B cell (primary cell): ENCODE measurements at regions of chr7 and their contacts with region 1.

Region 1: DNA sequence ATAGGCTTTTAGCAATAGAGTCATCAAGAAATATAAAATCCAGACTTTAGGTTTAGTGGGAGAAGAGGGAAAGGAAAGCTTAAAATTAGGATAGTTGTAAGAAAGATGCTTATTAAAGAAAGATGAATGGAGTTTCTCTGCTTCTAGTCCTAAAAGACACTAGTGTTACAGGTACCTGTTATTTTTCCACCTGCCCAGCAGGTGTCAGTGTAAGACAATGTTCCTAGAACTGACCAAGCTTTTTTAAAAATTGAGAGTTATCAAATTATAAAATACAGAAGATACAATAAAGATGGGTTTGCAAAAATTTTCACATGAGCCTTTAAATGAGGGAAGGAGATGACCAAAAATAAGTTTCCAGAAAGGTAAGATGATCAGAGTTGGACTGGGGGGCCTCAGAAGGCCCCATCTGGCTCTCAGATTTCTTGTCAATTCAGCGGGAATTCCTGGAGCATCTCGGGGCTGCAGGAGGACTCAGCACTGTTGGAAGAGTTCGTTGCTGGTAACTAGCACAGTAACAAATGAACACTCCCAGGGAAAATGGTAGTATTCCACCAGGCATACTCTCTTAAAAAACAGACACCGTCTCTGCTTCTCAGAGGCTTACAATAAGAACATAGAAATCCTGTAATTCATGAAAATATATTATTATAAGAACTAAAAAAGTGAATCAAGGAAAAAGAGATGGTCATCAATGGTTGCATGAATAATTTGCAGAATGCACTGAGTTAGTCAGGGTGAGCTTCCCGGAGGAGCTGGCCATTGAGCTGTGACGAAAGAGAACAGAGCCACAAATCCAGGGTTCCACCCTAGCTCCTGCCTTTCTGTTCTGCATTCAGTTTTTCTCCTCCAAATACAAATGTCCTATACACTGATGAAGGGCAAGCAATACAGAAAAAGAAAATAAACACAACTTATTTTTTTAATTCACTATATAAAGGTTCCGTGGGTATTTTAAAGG is 71.8 kb upstream of the PIK3CG start:
- DNase-seq: peak; percentile 72
- ATAC-seq: peak; percentile 58
- H3K4me3 ChIP-seq: no peak overlapping the region
- H3K4me3 Mint-ChIP-seq: no peak overlapping the region
- H3K27ac ChIP-seq: no peak overlapping the region
- H3K27ac Mint-ChIP-seq: no peak overlapping the region
- H3K4me1 ChIP-seq: no peaks in the 10 kb centered on the region
- H3K4me1 Mint-ChIP-seq: no peaks in the 10 kb centered on the region
- H3K27me3 ChIP-seq: no peaks in the 10 kb centered on the region
- H3K27me3 Mint-ChIP-seq: no peaks in the 10 kb centered on the region
- CTCF ChIP-seq: peak; percentile 93

Region 2: GRCh38 chr7:105759670-105760550 is 1033.4 kb before region 1 on chr7:
- CTCF ChIA-PET with region 1: no interaction called
- POLR2A ChIA-PET with region 1: no interaction called
- intact Hi-C with region 1: no loop called
- DNase-seq: peak; percentile 44
- ATAC-seq: no peak
- H3K4me3 ChIP-seq: no peak overlapping the region
- H3K4me3 Mint-ChIP-seq: no peak overlapping the region
- H3K27ac ChIP-seq: no peak overlapping the region
- H3K27ac Mint-ChIP-seq: no peak overlapping the region
- H3K4me1 ChIP-seq: no peaks in the 10 kb centered on the region
- H3K4me1 Mint-ChIP-seq: no peaks in the 10 kb centered on the region
- H3K27me3 ChIP-seq: no peaks in the 10 kb centered on the region
- H3K27me3 Mint-ChIP-seq: no peaks in the 10 kb centered on the region
- CTCF ChIP-seq: peak; percentile 55

Region 3: GRCh38 chr7:106561666-106562411 is 231.5 kb before region 1 on chr7:
- CTCF ChIA-PET with region 1: no interaction called
- POLR2A ChIA-PET with region 1: no interaction called
- intact Hi-C with region 1: no loop called
- DNase-seq: no peak
- ATAC-seq: no peak
- H3K4me3 ChIP-seq: no peak overlapping the region
- H3K4me3 Mint-ChIP-seq: no peak overlapping the region
- H3K27ac ChIP-seq: no peak overlapping the region
- H3K27ac Mint-ChIP-seq: no peak overlapping the region
- H3K4me1 ChIP-seq: no peaks in the 10 kb centered on the region
- H3K4me1 Mint-ChIP-seq: peaks cover 1% of the 10 kb centered on the region
- H3K27me3 ChIP-seq: no peaks in the 10 kb centered on the region
- H3K27me3 Mint-ChIP-seq: no peaks in the 10 kb centered on the region
- CTCF ChIP-seq: no peak

Region 4: GRCh38 chr7:106870983-106871410 is 77.7 kb after region 1 on chr7:
- CTCF ChIA-PET with region 1: interaction called, 8 read pairs
- POLR2A ChIA-PET with region 1: no interaction called
- intact Hi-C with region 1: loop called (anchors 2 kb)
- DNase-seq: peak; percentile 75
- ATAC-seq: peak; percentile 83
- H3K4me3 ChIP-seq: peak overlapping the region in 4 of 5 experiments; percentile 1 to 37 (median 14)
- H3K4me3 Mint-ChIP-seq: peak overlapping the region; percentile 73
- H3K27ac ChIP-seq: peak overlapping the region; percentile 36 to 64
- H3K27ac Mint-ChIP-seq: peak overlapping the region; percentile 68
- H3K4me1 ChIP-seq: peaks cover 52 to 55% of the 10 kb centered on the region in 2 donors
- H3K4me1 Mint-ChIP-seq: peaks cover 76% of the 10 kb centered on the region
- H3K27me3 ChIP-seq: no peaks in the 10 kb centered on the region
- H3K27me3 Mint-ChIP-seq: no peaks in the 10 kb centered on the region
- CTCF ChIP-seq: no peak

Region 5: DNA sequence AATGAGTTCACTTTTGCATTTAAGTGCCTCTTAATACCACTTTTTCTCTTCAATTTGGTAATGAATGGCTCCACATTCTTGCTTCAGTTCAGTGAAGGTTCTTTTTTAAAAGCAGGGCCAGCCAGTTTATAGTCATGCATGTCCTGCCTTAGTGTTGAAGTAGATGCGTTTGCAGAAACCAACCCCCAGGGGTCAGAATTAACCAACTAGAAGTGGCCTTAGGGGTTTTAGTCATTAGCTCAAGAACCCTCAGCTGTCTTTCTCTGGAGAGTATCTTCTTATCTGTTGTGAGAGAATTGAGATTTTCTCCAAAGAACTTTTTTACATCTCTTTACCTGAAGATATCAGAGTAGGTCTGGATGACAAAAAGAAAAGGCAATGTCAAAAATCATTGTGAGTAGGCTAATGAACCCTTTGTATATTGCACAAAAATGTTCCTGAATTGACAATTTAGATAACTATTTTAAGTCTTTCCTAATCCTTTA is 154.0 kb after region 1 on chr7:
- CTCF ChIA-PET with region 1: interaction called, 9 read pairs
- POLR2A ChIA-PET with region 1: no interaction called
- intact Hi-C with region 1: loop called (anchors 1 kb)
- DNase-seq: peak; percentile 49
- ATAC-seq: peak; percentile 57
- H3K4me3 ChIP-seq: no peak overlapping the region
- H3K4me3 Mint-ChIP-seq: no peak overlapping the region
- H3K27ac ChIP-seq: no peak overlapping the region
- H3K27ac Mint-ChIP-seq: no peak overlapping the region
- H3K4me1 ChIP-seq: no peaks in the 10 kb centered on the region
- H3K4me1 Mint-ChIP-seq: no peaks in the 10 kb centered on the region
- H3K27me3 ChIP-seq: no peaks in the 10 kb centered on the region
- H3K27me3 Mint-ChIP-seq: peaks cover 4% of the 10 kb centered on the region
- CTCF ChIP-seq: peak; percentile 56

Region 6: GRCh38 chr7:107044347-107045194 is 251.3 kb after region 1 on chr7 and contains the start of gene PRKAR2B:
- CTCF ChIA-PET with region 1: interaction called, 3 read pairs
- POLR2A ChIA-PET with region 1: no interaction called
- intact Hi-C with region 1: loop called (anchors 10 kb)
- DNase-seq: peak; percentile 86
- ATAC-seq: peak; percentile 94
- H3K4me3 ChIP-seq: peak within 1 kb of the TSS; percentile 41 to 69 (median 53)
- H3K4me3 Mint-ChIP-seq: peak within 1 kb of the TSS; percentile 92
- H3K27ac ChIP-seq: no peak within 1 kb of the TSS
- H3K27ac Mint-ChIP-seq: peak within 1 kb of the TSS; percentile 69
- H3K4me1 ChIP-seq: peaks cover 7 to 13% of the 10 kb centered on the region in 2 donors
- H3K4me1 Mint-ChIP-seq: peaks cover 13% of the 10 kb centered on the region
- H3K27me3 ChIP-seq: peaks cover 0 to 26% (median 24%) of the 10 kb centered on the region in 4 experiments
- H3K27me3 Mint-ChIP-seq: peaks cover 37% of the 10 kb centered on the region
- CTCF ChIP-seq: no peak
- total RNA-seq, gene PRKAR2B: 0.39 and 0.81 TPM in 2 replicates

Region 7: GRCh38 chr7:107879400-107880035 is 1086.2 kb after region 1 on chr7:
- CTCF ChIA-PET with region 1: interaction called, 3 read pairs
- POLR2A ChIA-PET with region 1: no interaction called
- intact Hi-C with region 1: loop called (anchors 5 kb)
- DNase-seq: peak; percentile 52
- ATAC-seq: peak; percentile 58
- H3K4me3 ChIP-seq: no peak overlapping the region
- H3K4me3 Mint-ChIP-seq: no peak overlapping the region
- H3K27ac ChIP-seq: no peak overlapping the region
- H3K27ac Mint-ChIP-seq: no peak overlapping the region
- H3K4me1 ChIP-seq: no peaks in the 10 kb centered on the region
- H3K4me1 Mint-ChIP-seq: peaks cover 3% of the 10 kb centered on the region
- H3K27me3 ChIP-seq: peaks cover 0 to 14% (median 3%) of the 10 kb centered on the region in 4 experiments
- H3K27me3 Mint-ChIP-seq: peaks cover 42% of the 10 kb centered on the region
- CTCF ChIP-seq: peak; percentile 87